Ovary (tissue), 10 donors: ENCODE measurements at regions of chr1 and their contacts with region 1.

Region 1: DNA sequence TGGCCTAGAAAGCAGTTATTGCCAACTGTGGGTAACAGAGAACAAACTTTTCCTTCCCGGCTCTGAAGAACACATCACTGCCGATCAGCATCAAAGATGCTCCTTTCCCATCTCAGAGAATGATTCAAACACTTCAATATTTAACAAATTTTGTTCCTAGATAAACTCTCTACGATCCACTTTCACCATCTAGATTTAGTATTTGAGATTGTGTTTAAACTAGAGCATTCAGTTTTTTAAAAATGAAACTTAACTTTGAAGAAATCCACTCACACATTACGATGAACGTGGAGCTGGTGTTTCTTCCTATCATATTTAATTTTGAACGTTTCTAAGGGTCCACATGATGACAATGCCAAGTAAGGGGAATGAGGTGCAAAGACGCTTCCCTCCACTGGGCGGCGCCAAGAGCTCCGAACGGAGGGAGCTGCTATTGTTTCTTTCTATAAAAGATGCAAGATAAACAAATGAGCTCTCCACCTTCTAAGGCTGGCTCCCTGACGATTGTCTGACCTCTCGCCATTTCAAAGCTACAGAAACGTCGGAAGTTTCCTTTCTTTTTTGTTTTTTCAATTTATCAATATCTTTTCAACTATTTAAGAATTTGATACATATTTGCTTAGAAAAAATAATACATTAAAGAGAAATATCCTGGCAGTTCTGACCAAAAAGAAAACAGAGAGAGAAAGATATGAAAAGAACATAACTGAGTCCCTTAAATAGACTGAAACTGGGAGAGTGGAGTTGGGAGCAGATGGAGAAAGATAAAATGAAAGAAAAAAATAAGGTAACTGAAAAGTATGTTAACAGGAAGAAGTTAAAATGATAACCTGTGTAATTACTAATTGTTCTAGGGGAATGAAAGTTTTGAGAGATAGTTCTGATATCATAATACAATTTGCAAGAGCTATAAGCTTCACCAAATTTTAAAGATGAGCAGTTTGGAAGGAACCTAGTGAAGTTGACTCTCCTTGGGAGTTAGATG is 4.4 kb upstream of the BARHL2 start:
- DNase-seq: no peak
- H3K4me3 ChIP-seq: no peak overlapping the region
- H3K27ac ChIP-seq: no peak overlapping the region
- H3K4me1 ChIP-seq: peaks cover 9% of the 10 kb centered on the region
- H3K27me3 ChIP-seq: peaks cover 3% of the 10 kb centered on the region
- CTCF ChIP-seq: no peak
- EP300 ChIP-seq: no peak
- POLR2A ChIP-seq: no peak

Region 2: DNA sequence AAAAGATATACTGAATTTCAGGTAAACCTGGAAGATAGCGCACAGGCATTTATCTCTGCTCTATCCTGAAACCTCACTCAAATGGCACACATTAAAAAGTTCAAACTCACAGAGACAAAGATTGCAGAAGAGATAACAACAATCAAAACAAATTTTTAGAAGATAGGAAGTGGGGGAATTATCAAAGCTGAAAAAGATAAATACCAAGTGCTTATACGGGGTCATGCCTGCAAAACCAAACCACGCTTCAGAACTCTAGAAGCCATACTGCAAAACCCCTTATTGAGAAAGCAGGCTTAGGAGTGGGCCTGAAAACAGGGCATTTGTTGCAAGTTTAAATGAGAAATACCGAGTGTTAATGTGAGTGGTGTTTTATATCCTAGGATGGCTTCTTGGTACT is 81.2 kb before region 1 on chr1:
- intact Hi-C with region 1: no loop called
- DNase-seq: no peak
- H3K4me3 ChIP-seq: no peak overlapping the region
- H3K27ac ChIP-seq: no peak overlapping the region
- H3K4me1 ChIP-seq: no peaks in the 10 kb centered on the region
- H3K27me3 ChIP-seq: no peaks in the 10 kb centered on the region
- CTCF ChIP-seq: no peak
- EP300 ChIP-seq: no peak
- POLR2A ChIP-seq: no peak

Region 3: GRCh38 chr1:91151702-91152101 is 430.2 kb after region 1 on chr1:
- intact Hi-C with region 1: loop called in 1 of 4 experiments (anchors 10 kb)
- DNase-seq: no peak
- H3K4me3 ChIP-seq: no peak overlapping the region
- H3K27ac ChIP-seq: no peak overlapping the region
- H3K4me1 ChIP-seq: no peaks in the 10 kb centered on the region
- H3K27me3 ChIP-seq: no peaks in the 10 kb centered on the region
- CTCF ChIP-seq: no peak
- EP300 ChIP-seq: no peak
- POLR2A ChIP-seq: no peak